CD4-positive, alpha-beta memory T cell (primary cell): ENCODE measurements at regions of chr13 and their contacts with region 1.

Region 1: DNA sequence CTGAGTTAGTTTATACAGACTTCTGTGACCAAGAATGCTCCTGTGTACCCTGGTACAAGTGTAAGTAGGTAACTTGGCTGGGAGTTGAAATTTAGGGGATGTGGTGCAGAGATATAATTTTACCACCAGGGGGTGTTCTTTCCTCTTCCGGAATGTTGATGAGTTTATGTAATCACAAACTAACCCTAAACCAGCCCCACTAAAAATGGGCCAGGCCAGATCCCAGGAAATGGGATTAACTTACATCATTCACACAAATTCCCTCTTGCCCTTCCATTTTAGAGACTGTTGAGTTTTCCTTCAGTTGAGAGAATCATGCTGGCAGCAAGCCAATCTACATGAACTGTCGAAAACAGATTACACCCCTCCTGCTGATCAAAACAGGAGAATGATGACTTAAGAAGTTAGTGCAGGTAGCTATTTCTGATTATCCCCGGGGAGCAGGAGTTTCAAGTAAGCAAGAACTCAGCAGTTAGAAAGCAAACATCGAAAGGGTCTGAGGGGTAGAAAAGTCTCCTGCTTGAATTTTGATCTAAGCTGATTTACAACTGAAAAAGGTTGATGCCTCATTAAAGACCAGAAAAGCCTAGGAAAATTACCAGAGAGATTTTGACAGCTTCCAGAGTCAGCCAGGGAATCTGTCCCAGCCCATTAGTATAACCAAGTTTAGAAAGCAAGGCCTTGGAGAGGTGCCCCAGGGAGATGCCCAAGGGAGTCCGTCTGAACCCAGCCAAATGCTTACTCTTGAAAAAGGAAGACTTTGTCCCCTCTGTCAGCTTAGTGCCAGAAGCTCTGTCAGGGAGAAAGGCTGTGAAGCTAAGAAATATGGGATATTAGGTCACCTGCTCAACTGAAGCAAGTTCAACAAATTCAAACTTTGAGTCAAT is 32.3 kb upstream of the MED4 start:
- DNase-seq: peak; percentile 50 to 80 (median 79)
- H3K4me3 ChIP-seq: no peak overlapping the region
- H3K4me3 Mint-ChIP-seq: peak overlapping the region; percentile 30 to 75 (median 60)
- H3K27ac ChIP-seq: peak overlapping the region; percentile 42
- H3K27ac Mint-ChIP-seq: peak overlapping the region; percentile 87 to 96 (median 90)
- H3K4me1 ChIP-seq: peaks cover 13% of the 10 kb centered on the region
- H3K4me1 Mint-ChIP-seq: peaks cover 19 to 31% (median 22%) of the 10 kb centered on the region in 4 donors
- H3K27me3 ChIP-seq: no peaks in the 10 kb centered on the region
- H3K27me3 Mint-ChIP-seq: no peaks in the 10 kb centered on the region

Region 2: GRCh38 chr13:47673000-47673915 is 453.9 kb before region 1 on chr13:
- CTCF ChIA-PET with region 1: no interaction called
- POLR2A ChIA-PET with region 1: no interaction called
- intact Hi-C with region 1: no loop called
- DNase-seq: no peak
- H3K4me3 ChIP-seq: no peak overlapping the region
- H3K4me3 Mint-ChIP-seq: no peak overlapping the region
- H3K27ac ChIP-seq: no peak overlapping the region
- H3K27ac Mint-ChIP-seq: no peak overlapping the region
- H3K4me1 ChIP-seq: no peaks in the 10 kb centered on the region
- H3K4me1 Mint-ChIP-seq: no peaks in the 10 kb centered on the region
- H3K27me3 ChIP-seq: no peaks in the 10 kb centered on the region
- H3K27me3 Mint-ChIP-seq: peaks cover 0 to 2% of the 10 kb centered on the region in 2 donors

Region 3: DNA sequence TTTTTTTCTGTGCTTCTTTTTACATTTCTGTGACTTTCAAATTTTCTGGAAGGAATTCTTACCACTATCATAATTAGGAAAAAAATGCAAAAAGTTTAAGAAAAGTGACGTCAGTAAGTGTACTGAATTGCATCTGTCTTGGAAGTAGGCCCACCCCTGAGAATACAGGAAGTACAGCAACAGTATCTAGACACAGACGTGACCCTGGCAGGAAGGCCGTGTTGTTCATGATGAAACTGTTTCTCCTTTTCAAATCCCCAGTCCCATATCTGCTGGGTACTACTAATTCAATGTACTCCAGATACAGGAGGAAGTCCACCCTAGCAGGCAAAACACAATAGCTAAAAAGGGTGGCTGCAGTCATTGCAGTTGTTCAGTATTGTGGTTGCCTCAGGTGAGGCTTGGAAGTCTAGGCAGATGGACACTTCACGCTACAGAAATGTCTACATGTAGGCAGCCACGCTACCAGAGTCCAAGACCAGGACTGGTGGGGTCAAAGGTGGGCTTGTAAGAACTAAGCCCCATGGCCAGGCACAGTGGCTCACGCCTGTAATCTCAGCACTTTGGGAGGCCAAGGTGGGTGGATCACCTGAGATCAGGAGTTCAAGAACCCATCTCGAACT is 17.3 kb after region 1 on chr13:
- CTCF ChIA-PET with region 1: interaction called, 11 read pairs
- POLR2A ChIA-PET with region 1: interaction called, 5 read pairs
- intact Hi-C with region 1: no loop called
- DNase-seq: peak in 1 of 5 donors; percentile 22
- H3K4me3 ChIP-seq: no peak overlapping the region
- H3K4me3 Mint-ChIP-seq: peak overlapping the region in 5 of 8 donors; percentile 7 to 43 (median 13)
- H3K27ac ChIP-seq: no peak overlapping the region
- H3K27ac Mint-ChIP-seq: peak overlapping the region; percentile 20 to 85 (median 70)
- H3K4me1 ChIP-seq: peaks cover 12% of the 10 kb centered on the region
- H3K4me1 Mint-ChIP-seq: peaks cover 15 to 36% (median 29%) of the 10 kb centered on the region in 4 donors
- H3K27me3 ChIP-seq: no peaks in the 10 kb centered on the region
- H3K27me3 Mint-ChIP-seq: no peaks in the 10 kb centered on the region

Region 4: GRCh38 chr13:48184260-48184659 is 57.1 kb after region 1 on chr13:
- CTCF ChIA-PET with region 1: interaction called, 5 read pairs
- POLR2A ChIA-PET with region 1: interaction called, 9 read pairs
- intact Hi-C with region 1: loop called (anchors 1 kb)
- DNase-seq: no peak
- H3K4me3 ChIP-seq: no peak overlapping the region
- H3K4me3 Mint-ChIP-seq: peak overlapping the region; percentile 2 to 87 (median 39)
- H3K27ac ChIP-seq: no peak overlapping the region
- H3K27ac Mint-ChIP-seq: peak overlapping the region; percentile 74 to 96 (median 80)
- H3K4me1 ChIP-seq: peaks cover 69% of the 10 kb centered on the region
- H3K4me1 Mint-ChIP-seq: peaks cover 45 to 67% (median 56%) of the 10 kb centered on the region in 4 donors
- H3K27me3 ChIP-seq: no peaks in the 10 kb centered on the region
- H3K27me3 Mint-ChIP-seq: no peaks in the 10 kb centered on the region

Region 5: DNA sequence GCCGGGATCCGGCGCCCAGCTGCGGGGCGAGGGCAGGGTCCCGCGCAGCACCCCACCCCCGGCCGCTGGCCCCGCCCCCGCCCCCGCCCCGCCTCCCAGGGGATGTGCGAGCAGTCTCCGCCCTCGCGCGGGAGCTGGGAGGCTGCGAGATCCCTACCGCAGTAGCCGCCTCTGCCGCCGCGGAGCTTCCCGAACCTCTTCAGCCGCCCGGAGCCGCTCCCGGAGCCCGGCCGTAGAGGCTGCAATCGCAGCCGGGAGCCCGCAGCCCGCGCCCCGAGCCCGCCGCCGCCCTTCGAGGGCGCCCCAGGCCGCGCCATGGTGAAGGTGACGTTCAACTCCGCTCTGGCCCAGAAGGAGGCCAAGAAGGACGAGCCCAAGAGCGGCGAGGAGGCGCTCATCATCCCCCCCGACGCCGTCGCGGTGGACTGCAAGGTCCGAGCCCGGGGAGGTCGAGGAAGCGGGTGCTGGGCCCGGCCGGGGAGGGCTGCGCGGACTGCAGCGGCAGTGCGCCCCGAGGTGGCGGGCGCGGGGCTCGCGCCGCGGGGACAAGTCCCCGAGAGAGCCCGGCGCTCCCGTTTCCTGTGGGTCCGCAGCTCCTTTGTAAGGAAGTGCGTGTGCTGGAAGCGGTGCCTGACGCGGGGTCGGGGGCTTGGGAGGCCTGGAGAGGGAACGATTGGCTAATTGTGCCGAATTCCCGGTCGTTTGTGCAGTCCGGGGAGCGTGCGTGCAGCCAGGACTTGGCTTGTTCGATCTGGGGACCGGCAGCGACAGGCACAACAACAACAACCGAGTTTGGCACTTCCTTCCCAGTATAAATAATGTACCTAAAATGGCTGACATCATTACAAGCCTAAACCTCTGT is 106.1 kb after region 1 on chr13 and contains the start of gene ITM2B:
- CTCF ChIA-PET with region 1: interaction called, 47 read pairs
- POLR2A ChIA-PET with region 1: interaction called, 92 read pairs
- intact Hi-C with region 1: loop called (anchors 1 kb)
- DNase-seq: peak; percentile 72 to 79 (median 76)
- H3K4me3 ChIP-seq: peak within 1 kb of the TSS; percentile 68 to 92
- H3K4me3 Mint-ChIP-seq: peak within 1 kb of the TSS; percentile 95 to 99 (median 98)
- H3K27ac ChIP-seq: peak within 1 kb of the TSS; percentile 98
- H3K27ac Mint-ChIP-seq: peak within 1 kb of the TSS; percentile 93 to 99 (median 98)
- H3K4me1 ChIP-seq: peaks cover 45% of the 10 kb centered on the region
- H3K4me1 Mint-ChIP-seq: peaks cover 37 to 69% (median 46%) of the 10 kb centered on the region in 4 donors
- H3K27me3 ChIP-seq: no peaks in the 10 kb centered on the region
- H3K27me3 Mint-ChIP-seq: no peaks in the 10 kb centered on the region
- total RNA-seq, gene ITM2B: 653 to 670 TPM

Region 6: GRCh38 chr13:48303359-48304142 is 176.4 kb after region 1 on chr13 and contains the start of gene RB1:
- CTCF ChIA-PET with region 1: no interaction called
- POLR2A ChIA-PET with region 1: interaction called, 6 read pairs
- intact Hi-C with region 1: loop called (anchors 1 kb)
- DNase-seq: peak; percentile 91 to 93 (median 92)
- H3K4me3 ChIP-seq: peak within 1 kb of the TSS; percentile 76 to 94
- H3K4me3 Mint-ChIP-seq: peak within 1 kb of the TSS; percentile 95 to 99 (median 97)
- H3K27ac ChIP-seq: peak within 1 kb of the TSS; percentile 96
- H3K27ac Mint-ChIP-seq: peak within 1 kb of the TSS; percentile 98 to 100 (median 99)
- H3K4me1 ChIP-seq: peaks cover 38% of the 10 kb centered on the region
- H3K4me1 Mint-ChIP-seq: peaks cover 21 to 41% (median 29%) of the 10 kb centered on the region in 4 donors
- H3K27me3 ChIP-seq: no peaks in the 10 kb centered on the region
- H3K27me3 Mint-ChIP-seq: no peaks in the 10 kb centered on the region
- total RNA-seq, gene RB1: 20.0 to 26.0 TPM

Region 7: GRCh38 chr13:48580185-48580803 is 453.1 kb after region 1 on chr13:
- CTCF ChIA-PET with region 1: interaction called, 21 read pairs
- POLR2A ChIA-PET with region 1: interaction called, 4 read pairs
- intact Hi-C with region 1: loop called (anchors 1 kb)
- DNase-seq: peak; percentile 64 to 74 (median 70)
- H3K4me3 ChIP-seq: no peak overlapping the region
- H3K4me3 Mint-ChIP-seq: peak overlapping the region in 1 of 8 donors; percentile 31
- H3K27ac ChIP-seq: no peak overlapping the region
- H3K27ac Mint-ChIP-seq: peak overlapping the region in 2 of 7 donors; percentile 0 to 43
- H3K4me1 ChIP-seq: peaks cover 19% of the 10 kb centered on the region
- H3K4me1 Mint-ChIP-seq: peaks cover 4 to 28% (median 13%) of the 10 kb centered on the region in 4 donors
- H3K27me3 ChIP-seq: no peaks in the 10 kb centered on the region
- H3K27me3 Mint-ChIP-seq: peaks cover 0 to 4% of the 10 kb centered on the region in 2 donors